ENCODE measurements at regions of chr12 and their contacts with region 1.

Region 1: DNA sequence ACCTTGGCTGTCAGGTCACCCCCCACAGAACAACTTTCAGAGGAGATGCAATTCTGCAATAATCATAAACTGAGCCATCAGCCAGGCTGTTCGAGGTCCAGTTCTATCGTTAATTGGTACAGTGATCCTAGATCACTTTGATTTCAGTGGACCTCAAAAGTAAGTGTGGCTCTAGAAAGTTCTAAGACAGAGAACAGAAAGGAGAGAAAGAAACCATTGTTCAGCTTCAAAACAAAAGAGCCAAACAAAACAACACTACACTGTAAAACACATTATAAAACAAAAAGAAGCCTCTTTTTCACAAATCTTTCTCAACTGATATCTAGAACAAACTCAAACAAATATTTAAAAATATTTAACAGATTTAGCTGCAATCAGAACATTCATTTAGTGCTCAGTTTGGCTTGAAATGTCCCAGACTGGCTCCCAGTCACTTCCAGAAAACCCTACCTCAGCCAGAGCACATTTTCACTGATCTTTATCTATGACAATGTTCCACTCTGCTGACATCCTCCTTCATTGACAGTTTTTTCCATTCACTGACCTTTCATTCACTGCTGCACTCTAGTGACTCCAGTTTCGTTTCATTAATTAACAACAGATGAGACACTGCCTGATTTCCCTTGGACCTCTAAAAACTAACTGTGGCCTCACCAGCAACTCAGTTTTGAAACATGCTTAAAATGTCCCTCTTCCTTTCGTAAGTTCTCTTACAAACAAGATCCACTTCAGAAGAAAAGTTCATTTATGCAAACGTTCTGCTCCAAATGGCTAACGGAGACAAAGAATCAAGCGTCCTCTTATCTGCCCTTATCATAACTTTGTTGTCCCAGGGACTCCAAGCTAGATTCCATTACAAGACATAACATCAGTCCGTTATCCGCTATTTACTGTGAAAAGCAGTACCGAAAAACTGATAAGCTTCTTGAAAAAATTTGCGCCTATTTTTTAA is 56.8 kb downstream of the DUSP16 start:
- DNase-seq: peak in 1 of 2 experiments; percentile 23
- H3K4me3 ChIP-seq: no peak overlapping the region
- H3K27ac ChIP-seq: no peak overlapping the region
- H3K4me1 ChIP-seq: peaks cover 0 to 17% (median 6%) of the 10 kb centered on the region in 4 experiments; a peak in 4 of 7 replicates
- H3K27me3 ChIP-seq: no peaks in the 10 kb centered on the region
- CTCF ChIP-seq: no peak
- EP300 ChIP-seq: no peak
- POLR2A ChIP-seq: no peak
- RAD21 ChIP-seq: no peak

Region 2: DNA sequence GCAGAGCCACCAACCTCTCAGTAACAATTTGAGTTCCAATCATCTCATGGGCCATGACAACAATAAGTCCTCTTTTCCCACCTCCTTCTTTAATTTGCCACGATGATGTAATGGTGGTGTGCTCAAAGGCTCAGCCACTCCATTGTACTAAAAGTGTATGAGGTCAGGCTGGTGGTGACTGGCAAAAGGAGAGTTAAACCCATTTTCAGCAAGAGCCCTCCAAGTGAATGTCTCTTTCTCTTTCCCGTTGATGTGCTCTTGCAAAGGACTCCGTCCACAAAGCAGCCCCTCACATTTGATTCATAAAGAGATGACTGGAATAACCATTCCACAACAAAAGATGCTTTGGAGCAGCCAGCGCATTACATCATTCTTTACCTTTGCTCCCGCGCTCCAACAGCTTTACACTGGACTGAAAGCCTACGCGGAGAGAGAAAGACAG is 15.2 kb after region 1 on chr12:
- CTCF ChIA-PET with region 1: interaction called, 9 read pairs
- POLR2A ChIA-PET with region 1: interaction called, 16 read pairs
- DNase-seq: no peak
- H3K4me3 ChIP-seq: no peak overlapping the region
- H3K27ac ChIP-seq: no peak overlapping the region
- H3K4me1 ChIP-seq: peaks cover 0 to 10% (median 8%) of the 10 kb centered on the region in 4 experiments; a peak in 4 of 7 replicates
- H3K27me3 ChIP-seq: no peaks in the 10 kb centered on the region
- CTCF ChIP-seq: no peak
- EP300 ChIP-seq: no peak
- POLR2A ChIP-seq: no peak
- RAD21 ChIP-seq: no peak

Region 3: DNA sequence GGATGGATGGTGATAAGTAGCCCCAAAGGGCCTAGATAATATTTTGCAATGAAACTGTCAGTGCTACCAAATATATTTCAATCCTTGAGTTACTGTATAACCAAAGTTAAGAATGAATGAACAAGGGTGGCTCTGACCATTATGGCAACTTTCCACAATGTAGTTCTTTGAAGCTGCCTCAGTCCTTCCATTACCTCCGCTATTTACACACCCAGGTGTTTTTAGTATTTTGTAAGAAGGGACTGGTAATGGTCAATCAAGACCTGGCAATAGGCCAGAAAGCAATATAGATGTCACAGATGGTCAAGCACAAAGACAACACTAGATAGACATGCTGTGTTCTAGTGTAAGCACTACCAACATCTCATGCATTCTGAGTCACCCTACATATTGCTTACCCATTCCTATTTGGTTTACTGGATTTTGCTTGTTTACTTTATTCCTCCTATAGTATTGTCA is 40.5 kb after region 1 on chr12:
- CTCF ChIA-PET with region 1: no interaction called
- POLR2A ChIA-PET with region 1: no interaction called
- DNase-seq: no peak
- H3K4me3 ChIP-seq: no peak overlapping the region
- H3K27ac ChIP-seq: no peak overlapping the region
- H3K4me1 ChIP-seq: no peaks in the 10 kb centered on the region; a peak in 1 of 7 replicates
- H3K27me3 ChIP-seq: no peaks in the 10 kb centered on the region
- CTCF ChIP-seq: no peak
- EP300 ChIP-seq: no peak
- POLR2A ChIP-seq: no peak
- RAD21 ChIP-seq: no peak